RWPE1 (cell line): ENCODE measurements at regions of chr6 and their contacts with region 1.

Region 1: DNA sequence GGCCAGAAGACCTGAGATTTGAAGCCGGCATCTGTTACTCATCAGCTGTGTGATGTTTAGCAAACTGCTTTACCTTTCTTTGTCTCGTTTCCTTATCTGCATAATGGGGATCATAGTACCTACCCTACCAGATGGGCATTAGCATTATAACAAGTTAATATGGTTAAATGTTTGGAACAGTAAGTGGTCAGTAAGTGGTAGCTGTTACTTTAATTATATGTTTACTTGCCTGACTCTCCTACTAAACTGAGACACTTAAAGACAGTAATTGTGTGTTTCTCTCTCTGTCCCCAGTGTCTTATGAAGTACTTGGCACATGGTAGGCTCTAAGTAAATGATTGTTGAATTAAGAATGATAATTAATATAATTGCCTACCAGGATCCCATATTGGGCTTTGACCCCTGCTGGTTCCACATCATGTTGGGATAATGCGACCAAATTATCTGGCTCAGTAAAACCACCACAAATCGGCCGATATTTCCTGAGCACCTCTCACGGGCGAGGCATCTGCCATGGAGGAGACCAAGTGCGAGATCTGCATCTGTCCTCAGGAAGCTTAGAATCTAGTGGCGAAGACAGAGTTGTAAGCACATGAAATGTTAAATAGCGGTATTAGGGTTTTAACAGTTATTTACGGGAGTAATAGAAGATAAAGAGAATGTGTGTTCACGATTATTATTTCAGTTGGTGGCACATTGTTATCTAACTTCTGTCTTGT is 31.4 kb downstream of the PTK7 start:
- DNase-seq: no peak
- H3K27ac ChIP-seq: no peak overlapping the region
- CTCF ChIP-seq: no peak

Region 2: DNA sequence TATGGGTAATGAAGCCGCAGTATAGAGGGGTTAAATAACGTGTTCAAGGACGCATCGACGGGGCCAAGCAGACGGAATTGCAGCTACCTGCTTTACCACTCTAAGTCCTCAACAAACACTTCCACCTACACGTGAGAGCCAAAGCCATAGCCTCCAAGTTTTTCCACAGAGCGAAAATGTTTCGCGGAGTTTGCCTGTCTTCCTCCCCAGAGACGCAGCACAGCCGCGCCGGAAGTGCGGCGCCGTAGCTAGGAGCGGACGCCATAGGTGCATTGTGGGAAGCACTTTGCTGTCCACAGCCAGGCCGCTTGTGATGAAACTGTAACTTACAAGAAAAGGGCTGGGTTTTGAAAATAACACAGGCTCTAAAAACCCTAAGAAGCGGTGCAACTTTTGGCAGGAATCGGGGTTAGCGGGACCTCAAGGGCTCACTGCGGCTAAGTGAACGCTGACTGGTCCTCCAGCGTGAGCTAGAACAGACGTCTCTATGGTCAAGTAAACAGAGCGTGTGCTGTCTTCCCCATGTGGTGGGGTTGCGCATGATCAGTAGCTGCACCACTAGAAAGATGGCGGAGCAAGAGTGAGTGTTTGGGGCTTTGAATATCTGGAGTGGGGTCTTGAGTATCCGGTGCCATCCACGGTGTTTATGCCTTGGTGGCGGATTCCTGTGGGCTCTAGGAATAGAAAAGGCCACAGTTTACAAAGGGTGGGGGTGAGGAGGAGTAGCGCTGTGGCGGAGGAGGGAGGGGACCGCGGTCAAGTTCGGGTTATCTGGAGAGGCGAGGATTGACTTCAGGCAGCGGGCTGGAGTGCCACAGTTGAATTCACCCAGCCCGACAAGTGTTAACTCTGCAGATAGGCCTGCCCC is 227.9 kb before region 1 on chr6 and contains the start of gene RPL7L1:
- CTCF ChIA-PET with region 1: no interaction called
- POLR2A ChIA-PET with region 1: no interaction called
- DNase-seq: peak; percentile 59
- H3K27ac ChIP-seq: peak within 1 kb of the TSS; percentile 92
- CTCF ChIP-seq: no peak

Region 3: GRCh38 chr6:43070028-43070632 is 37.4 kb before region 1 on chr6:
- CTCF ChIA-PET with region 1: interaction called, 13 read pairs
- POLR2A ChIA-PET with region 1: no interaction called
- DNase-seq: peak; percentile 63
- H3K27ac ChIP-seq: 0 out of 2 replicates have a peak overlapping the region, but pooled peaks have one; percentile 7
- CTCF ChIP-seq: peak; percentile 63